ENCODE measurements at regions of chr6 and their contacts with region 1.

Region 1: DNA sequence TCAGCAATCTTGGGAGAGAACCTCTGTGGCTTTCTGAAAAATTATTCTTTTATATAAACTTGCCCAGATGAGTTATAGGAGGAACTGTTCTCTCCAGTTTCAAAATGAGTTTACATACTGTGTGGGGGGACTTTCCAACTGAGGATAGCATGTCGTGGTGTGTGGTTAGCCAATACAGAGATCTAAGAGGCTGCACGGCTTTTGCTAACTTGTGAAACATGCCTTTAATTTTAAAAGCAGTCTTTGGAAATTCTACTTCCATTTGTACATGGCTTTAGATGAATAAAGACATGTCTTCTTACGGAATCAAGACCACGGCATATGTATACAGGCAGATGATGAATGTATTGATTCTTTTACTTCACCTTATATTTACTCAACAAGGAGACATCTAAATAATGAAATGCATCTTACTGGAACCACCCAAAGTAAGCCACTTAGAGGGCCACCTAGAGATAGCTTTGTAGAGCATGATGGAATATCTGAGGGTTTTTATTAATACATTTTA is 39.8 kb downstream of the HIVEP1 start:
- DNase-seq: peak in 10 of 14 experiments; percentile 17 to 90 (median 45)
- ATAC-seq: peak; percentile 98
- H3K4me3 ChIP-seq: no peak overlapping the region
- H3K4me3 Mint-ChIP-seq: peak overlapping the region; percentile 26
- H3K27ac ChIP-seq: peak overlapping the region in 1 of 2 donors; percentile 3
- H3K27ac Mint-ChIP-seq: peak overlapping the region; percentile 84
- H3K4me1 ChIP-seq: peaks cover 10% of the 10 kb centered on the region
- H3K4me1 Mint-ChIP-seq: peaks cover 77% of the 10 kb centered on the region
- H3K27me3 ChIP-seq: no peaks in the 10 kb centered on the region
- H3K27me3 Mint-ChIP-seq: no peaks in the 10 kb centered on the region
- CTCF ChIP-seq: no peak

Region 2: GRCh38 chr6:12017263-12017662 is 34.7 kb before region 1 on chr6:
- CTCF ChIA-PET with region 1: no interaction called
- POLR2A ChIA-PET with region 1: interaction called, 7 read pairs
- intact Hi-C with region 1: loop called (anchors 2 to 5 kb)
- DNase-seq: peak in 7 of 14 experiments; percentile 10 to 50 (median 32)
- ATAC-seq: peak; percentile 11
- H3K4me3 ChIP-seq: no peak overlapping the region
- H3K4me3 Mint-ChIP-seq: peak overlapping the region; percentile 22
- H3K27ac ChIP-seq: no peak overlapping the region
- H3K27ac Mint-ChIP-seq: peak overlapping the region; percentile 78
- H3K4me1 ChIP-seq: peaks cover 17% of the 10 kb centered on the region
- H3K4me1 Mint-ChIP-seq: peaks cover 80% of the 10 kb centered on the region
- H3K27me3 ChIP-seq: no peaks in the 10 kb centered on the region
- H3K27me3 Mint-ChIP-seq: peaks cover 5% of the 10 kb centered on the region
- CTCF ChIP-seq: no peak

Measured in CD4-positive, alpha-beta T cell (primary cell).